ENCODE measurements at regions of chr2 and their contacts with region 1.

Region 1: GRCh38 chr2:202634556-202635427 is at the start of gene FAM117B:
- DNase-seq: peak; percentile 93 to 100 (median 98)

Region 2: DNA sequence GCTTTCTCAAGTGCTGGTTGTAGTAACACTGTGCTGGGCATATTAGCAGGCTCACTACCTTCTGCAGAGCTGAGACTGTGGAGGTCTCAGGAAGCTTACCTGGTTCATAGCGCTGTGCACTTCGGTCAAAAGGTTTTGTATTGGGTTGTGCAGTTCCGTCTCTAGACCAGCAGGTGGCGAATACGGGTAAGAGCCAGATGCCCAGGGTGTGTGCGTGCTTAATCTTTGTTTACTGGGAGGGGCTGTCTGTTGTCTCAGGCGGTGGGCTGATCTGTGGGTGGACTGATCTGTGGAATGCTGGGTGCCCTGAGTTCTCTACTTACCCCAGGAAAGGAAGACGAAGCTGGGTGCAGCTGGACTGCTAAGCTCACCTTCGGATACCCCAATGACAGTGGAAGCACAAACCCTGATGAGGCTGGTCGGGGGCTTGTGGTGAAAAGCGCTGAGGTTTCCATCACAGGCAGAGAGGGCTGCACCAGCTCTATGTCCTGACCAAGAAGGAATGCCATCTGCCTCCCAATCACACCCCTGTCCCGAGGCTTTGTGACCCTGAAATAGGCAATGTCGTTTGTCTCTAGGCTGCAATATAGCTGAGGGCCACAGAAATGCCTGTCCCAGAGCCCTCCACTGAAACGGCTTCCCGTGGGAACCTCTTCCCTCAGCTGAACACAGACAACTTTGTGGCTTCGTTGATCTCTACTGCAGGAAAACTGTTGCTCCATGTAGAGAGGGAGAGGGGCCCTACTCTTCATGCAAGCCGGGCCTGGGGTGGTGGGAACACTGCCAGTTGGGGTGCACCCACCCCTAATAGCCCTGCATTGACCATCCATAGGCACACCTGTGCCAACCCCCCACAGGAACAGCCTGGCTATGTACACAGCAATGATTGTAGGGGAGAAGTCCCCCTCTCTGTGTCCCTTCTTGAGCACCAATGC is 45.9 kb before region 1 on chr2:
- intact Hi-C with region 1: loop called (anchors 5 kb)
- DNase-seq: peak in 7 of 10 donors; percentile 13 to 89 (median 58)